SK-N-SH (cell line): ENCODE measurements at regions of chr17 and their contacts with region 1.

Region 1: DNA sequence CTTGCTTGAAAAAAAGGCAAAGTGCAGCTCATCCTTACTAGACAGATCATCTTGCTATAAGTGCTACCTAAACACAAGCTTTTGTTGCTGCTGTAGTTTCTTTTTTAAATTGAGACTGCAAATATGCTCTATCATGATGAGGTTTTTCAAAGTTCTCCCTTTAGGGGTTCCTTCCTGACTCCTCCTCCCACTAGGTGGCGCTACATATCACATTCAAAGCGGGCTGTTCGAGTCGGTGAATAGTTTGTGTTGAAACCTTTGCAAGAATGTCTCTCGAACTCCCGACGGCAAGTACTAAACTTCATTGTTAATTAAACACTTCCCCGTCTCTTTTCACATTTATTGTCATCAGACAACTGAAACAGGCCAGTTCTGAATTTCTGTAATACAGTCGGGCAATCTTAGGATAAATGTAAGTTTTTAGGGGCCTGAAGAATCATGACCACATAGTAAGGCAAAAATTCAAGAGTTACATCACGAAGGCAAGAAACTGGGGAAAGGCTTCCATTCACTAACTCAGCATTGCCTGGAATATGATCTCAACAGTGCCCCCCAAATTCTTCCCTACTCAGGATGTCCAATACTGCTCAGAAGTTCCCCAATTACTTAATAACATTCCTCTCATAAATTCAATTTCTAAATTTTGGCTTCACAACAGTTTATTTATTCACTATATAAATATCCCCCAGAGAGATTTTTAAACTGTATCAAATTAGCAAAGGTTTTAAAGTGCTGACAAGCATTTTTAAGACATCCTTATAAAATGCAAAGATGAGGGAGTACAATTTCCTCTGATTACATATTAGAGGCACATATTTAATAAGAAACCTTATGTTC is 6.7 kb downstream of the HS3ST3A1 start:
- DNase-seq: peak; percentile 70
- H3K4me3 ChIP-seq: peak overlapping the region; percentile 3 to 40; a peak in 2 of 4 replicates
- H3K27ac ChIP-seq: peak overlapping the region; percentile 11 to 58; a peak in 3 of 4 replicates
- H3K4me1 ChIP-seq: peaks cover 4 to 7% of the 10 kb centered on the region in 2 experiments; a peak in 3 of 4 replicates
- H3K27me3 ChIP-seq: no peaks in the 10 kb centered on the region
- CTCF ChIP-seq: peak; percentile 94
- EP300 ChIP-seq: no peak
- RAD21 ChIP-seq: peak; percentile 67

Region 2: DNA sequence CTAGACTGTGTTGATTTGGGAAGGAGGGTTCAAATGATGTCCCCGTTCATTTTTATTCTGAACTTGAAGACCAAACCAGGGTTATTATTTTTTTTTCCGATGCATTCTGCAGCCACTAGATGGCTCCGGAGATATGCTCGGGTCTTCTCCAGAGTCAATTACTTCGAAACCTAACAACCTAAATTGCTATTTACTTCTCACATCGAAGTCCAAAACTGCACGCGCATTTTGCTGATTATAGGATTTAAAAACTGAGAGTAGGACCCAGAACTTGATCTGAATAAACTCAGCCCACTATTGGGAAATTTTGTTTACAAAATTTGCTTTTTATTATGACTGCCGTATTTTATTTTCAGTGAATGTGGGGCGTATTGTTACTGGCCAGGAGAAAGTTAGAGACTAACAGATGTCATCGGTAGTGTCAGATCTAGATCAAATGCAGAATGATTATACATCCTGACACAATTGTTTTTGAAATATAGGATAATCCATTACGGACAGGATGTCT is 257.1 kb before region 1 on chr17:
- CTCF ChIA-PET with region 1: interaction called, 12 read pairs
- POLR2A ChIA-PET with region 1: no interaction called
- DNase-seq: peak; percentile 51
- H3K4me3 ChIP-seq: peak overlapping the region; percentile 41 to 57
- H3K27ac ChIP-seq: peak overlapping the region; percentile 37 to 62; a peak in 3 of 4 replicates
- H3K4me1 ChIP-seq: peaks cover 0 to 3% of the 10 kb centered on the region in 2 experiments; a peak in 1 of 4 replicates
- H3K27me3 ChIP-seq: no peaks in the 10 kb centered on the region
- CTCF ChIP-seq: peak; percentile 93
- EP300 ChIP-seq: peak in 1 of 2 experiments; percentile 82; a peak in 2 of 4 replicates
- RAD21 ChIP-seq: peak; percentile 96

Region 3: GRCh38 chr17:13581925-13582324 is 13.1 kb before region 1 on chr17:
- CTCF ChIA-PET with region 1: interaction called, 11 read pairs
- POLR2A ChIA-PET with region 1: no interaction called
- DNase-seq: no peak
- H3K4me3 ChIP-seq: no peak overlapping the region; a peak in 1 of 4 replicates
- H3K27ac ChIP-seq: peak overlapping the region; percentile 31 to 55; a peak in 3 of 4 replicates
- H3K4me1 ChIP-seq: peaks cover 0 to 15% of the 10 kb centered on the region in 2 experiments; a peak in 1 of 4 replicates
- H3K27me3 ChIP-seq: no peaks in the 10 kb centered on the region
- CTCF ChIP-seq: no peak
- EP300 ChIP-seq: 0 out of 4 replicates have a peak, but pooled peaks of 1 of the 2 experiments have one; percentile 18
- RAD21 ChIP-seq: no peak

Region 4: GRCh38 chr17:13638855-13639458 is 44.0 kb after region 1 on chr17:
- CTCF ChIA-PET with region 1: no interaction called
- POLR2A ChIA-PET with region 1: no interaction called
- DNase-seq: no peak
- H3K4me3 ChIP-seq: no peak overlapping the region
- H3K27ac ChIP-seq: no peak overlapping the region
- H3K4me1 ChIP-seq: no peaks in the 10 kb centered on the region
- H3K27me3 ChIP-seq: peaks cover 14% of the 10 kb centered on the region
- CTCF ChIP-seq: no peak
- EP300 ChIP-seq: no peak
- RAD21 ChIP-seq: no peak